Activated naive CD4-positive, alpha-beta T cell treated with anti-CD3 and anti-CD28 coated beads for 36 hours (primary cell): ENCODE measurements at regions of chr11 and their contacts with region 1.

Region 1: GRCh38 chr11:14499554-14500180 is at the start of gene COPB1:
- DNase-seq: peak; percentile 97
- H3K4me3 Mint-ChIP-seq: peak within 1 kb of the TSS; percentile 99
- H3K27ac Mint-ChIP-seq: peak within 1 kb of the TSS; percentile 99
- H3K4me1 Mint-ChIP-seq: peaks cover 40% of the 10 kb centered on the region
- H3K27me3 Mint-ChIP-seq: no peaks in the 10 kb centered on the region
- total RNA-seq, gene COPB1: 111 to 112 TPM

Region 2: DNA sequence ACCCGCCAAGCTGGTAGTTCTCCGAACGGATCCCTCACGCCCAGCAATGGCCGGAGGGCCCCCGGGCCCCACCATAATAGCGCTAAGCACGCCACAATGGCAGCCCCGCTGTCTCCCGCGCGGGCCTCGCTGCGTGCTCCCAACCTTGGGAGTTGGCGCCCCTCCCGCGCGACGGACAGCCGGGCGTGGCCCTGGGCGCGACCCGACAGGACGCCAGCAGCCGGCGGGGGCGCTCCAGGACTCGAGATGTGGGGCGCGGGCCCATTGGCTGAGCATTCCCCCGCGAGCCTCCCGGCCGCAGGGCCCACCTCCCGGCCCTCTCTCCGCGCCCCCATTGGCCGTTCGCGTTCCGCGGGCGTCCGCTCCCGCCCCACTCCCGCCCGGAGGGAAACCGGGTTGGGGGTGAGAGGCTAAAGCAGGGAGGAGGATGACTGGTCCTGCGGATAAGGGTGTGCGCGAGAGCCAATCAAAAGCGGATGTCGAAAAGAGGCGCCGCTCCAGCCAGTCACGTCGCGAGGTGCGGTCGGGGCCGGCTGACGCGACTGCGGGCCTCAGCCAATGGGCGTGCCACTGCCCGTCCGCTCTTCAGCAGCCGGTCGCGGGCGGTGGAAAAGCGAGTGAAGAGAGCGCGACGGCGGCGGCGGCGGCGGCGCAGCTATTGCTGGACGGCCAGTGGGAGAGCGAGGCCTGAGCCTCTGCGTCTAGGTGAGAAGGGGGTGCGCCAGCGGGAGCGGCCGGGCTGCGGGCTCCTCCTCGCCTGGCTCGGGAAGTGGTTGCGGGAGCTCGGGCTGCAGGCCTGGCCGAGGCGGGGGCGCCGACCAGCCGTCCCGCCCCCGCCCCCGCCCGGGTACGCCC is 831.3 kb before region 1 on chr11 and contains the start of gene FAR1:
- CTCF ChIA-PET with region 1: no interaction called
- intact Hi-C with region 1: loop called (anchors 5 kb)
- DNase-seq: peak; percentile 98
- H3K4me3 Mint-ChIP-seq: peak within 1 kb of the TSS; percentile 95
- H3K27ac Mint-ChIP-seq: peak within 1 kb of the TSS; percentile 92
- H3K4me1 Mint-ChIP-seq: peaks cover 40% of the 10 kb centered on the region
- H3K27me3 Mint-ChIP-seq: peaks cover 7% of the 10 kb centered on the region
- total RNA-seq, gene FAR1: 37.2 to 42.3 TPM

Region 3: DNA sequence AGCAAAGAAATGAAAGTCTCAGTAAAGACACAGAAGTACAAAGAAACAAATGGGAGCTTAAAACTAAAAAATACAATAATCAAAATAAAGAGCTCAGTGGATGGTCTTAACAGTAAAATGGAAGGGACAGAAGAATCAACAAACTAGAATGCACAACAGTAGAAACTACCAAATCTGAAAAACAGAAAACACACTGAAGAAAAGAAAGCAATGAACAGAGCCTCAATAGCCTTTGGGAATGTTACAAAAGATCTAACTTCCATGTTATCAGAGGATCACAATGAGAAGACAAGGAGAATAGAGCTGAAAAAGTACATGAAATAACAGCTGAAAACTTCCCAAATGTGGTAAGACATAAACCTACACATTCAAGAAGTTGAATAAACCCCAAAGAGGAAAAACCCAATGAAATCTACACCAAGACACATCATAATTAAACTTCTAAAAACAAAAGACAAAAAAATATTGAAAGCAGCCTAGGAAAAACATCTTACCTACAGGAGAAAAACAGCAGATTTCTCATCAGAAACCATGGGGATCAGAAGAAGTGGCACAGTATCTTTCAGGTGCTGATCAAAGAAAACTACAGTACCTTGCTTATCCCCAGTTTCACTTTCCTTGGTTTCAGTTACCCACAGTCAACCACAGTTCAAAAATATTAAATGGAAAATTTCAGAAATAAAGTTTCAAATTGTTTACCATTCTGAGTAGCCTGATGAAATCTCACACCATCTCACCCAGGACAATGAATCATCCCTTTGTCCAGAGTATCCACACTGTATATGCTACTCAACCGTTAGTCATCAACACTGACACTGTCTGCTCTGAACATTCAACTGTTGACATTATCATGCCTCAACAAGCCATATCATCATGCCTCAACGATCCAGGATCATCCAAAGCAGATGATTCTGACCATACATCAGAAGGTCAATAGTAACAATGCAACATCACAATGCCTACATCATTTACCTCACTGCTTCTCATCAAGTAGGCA is 162.9 kb before region 1 on chr11:
- CTCF ChIA-PET with region 1: no interaction called
- intact Hi-C with region 1: no loop called
- DNase-seq: peak; percentile 32
- H3K4me3 Mint-ChIP-seq: peak overlapping the region; percentile 16
- H3K27ac Mint-ChIP-seq: peak overlapping the region; percentile 76
- H3K4me1 Mint-ChIP-seq: peaks cover 52% of the 10 kb centered on the region
- H3K27me3 Mint-ChIP-seq: no peaks in the 10 kb centered on the region

Region 4: DNA sequence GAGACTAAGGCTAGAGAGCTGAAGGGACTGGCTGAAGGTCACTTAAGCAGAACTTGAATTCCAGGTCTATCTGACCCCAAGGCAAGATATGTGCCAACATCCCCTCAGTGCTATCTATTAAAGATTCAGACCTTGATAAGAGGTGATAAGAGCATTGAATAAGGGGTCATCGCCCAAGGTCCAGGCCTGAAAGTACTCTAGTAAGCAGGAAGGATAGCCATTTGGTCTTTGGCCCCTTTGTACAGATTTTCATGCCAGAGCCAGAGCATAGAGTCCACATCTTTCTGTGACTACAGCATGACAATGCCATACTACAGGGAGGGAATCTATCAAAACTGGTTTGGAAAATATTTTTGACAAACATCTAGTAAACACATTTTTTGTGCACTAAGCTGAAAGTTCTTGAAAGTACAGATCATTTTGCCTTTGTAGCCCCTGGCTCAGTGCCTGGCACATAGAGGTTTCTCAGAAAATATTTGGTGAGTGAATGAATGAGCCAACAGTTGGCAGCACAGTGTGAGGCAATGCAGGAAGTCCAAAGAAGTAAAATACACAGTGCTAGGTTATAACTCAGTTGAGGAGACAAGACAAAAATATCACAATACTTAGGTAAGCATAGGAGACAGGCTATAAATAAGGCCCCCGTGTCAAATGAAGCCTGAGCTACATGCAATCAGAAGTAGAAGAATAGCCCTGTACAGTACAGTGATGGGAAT is 125.6 kb before region 1 on chr11:
- CTCF ChIA-PET with region 1: no interaction called
- intact Hi-C with region 1: loop called (anchors 5 kb)
- DNase-seq: no peak
- H3K4me3 Mint-ChIP-seq: no peak overlapping the region
- H3K27ac Mint-ChIP-seq: no peak overlapping the region
- H3K4me1 Mint-ChIP-seq: peaks cover 52% of the 10 kb centered on the region
- H3K27me3 Mint-ChIP-seq: peaks cover 7% of the 10 kb centered on the region

Region 5: GRCh38 chr11:14463623-14464022 is 36.0 kb before region 1 on chr11:
- CTCF ChIA-PET with region 1: no interaction called
- intact Hi-C with region 1: loop called (anchors 5 kb)
- DNase-seq: no peak
- H3K4me3 Mint-ChIP-seq: no peak overlapping the region
- H3K27ac Mint-ChIP-seq: no peak overlapping the region
- H3K4me1 Mint-ChIP-seq: peaks cover 12% of the 10 kb centered on the region
- H3K27me3 Mint-ChIP-seq: no peaks in the 10 kb centered on the region

Region 6: DNA sequence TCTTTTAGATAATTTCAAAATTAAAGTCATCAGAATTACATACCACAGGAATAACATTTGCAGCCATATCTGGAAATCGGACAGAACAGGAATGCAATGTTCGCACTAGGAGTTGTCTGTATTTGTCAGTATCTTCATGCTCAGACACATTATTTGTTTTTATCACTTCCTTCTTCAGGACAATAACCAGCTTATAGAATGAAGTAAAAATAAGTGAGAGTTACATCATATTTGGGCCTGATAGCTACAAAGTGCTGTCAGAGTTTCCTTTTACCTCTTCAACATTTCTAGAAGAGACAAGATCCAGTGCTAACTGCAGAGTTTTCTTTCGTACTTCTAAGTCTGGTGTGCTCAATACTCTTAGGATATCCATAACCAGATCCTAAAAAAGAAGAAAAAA is 19.0 kb before region 1 on chr11:
- CTCF ChIA-PET with region 1: no interaction called
- intact Hi-C with region 1: loop called (anchors 2 kb)
- DNase-seq: no peak
- H3K4me3 Mint-ChIP-seq: no peak overlapping the region
- H3K27ac Mint-ChIP-seq: peak overlapping the region; percentile 84
- H3K4me1 Mint-ChIP-seq: peaks cover 13% of the 10 kb centered on the region
- H3K27me3 Mint-ChIP-seq: no peaks in the 10 kb centered on the region

Region 7: GRCh38 chr11:14519917-14520746 is 20.5 kb after region 1 on chr11 and contains the start of gene PSMA1:
- CTCF ChIA-PET with region 1: interaction called, 3 read pairs
- intact Hi-C with region 1: loop called (anchors 1 kb)
- DNase-seq: peak; percentile 98
- H3K4me3 Mint-ChIP-seq: peak within 1 kb of the TSS; percentile 96
- H3K27ac Mint-ChIP-seq: peak within 1 kb of the TSS; percentile 97
- H3K4me1 Mint-ChIP-seq: peaks cover 24% of the 10 kb centered on the region
- H3K27me3 Mint-ChIP-seq: no peaks in the 10 kb centered on the region
- total RNA-seq, gene PSMA1: 367 to 375 TPM